Mammary epithelial cell (primary cell): ENCODE measurements at regions of chr1 and their contacts with region 1.

Region 1: GRCh38 chr1:19811206-19811851 is 3.8 kb downstream of the RNF186 start:
- DNase-seq: no peak
- H3K4me3 ChIP-seq: no peak overlapping the region
- H3K27ac ChIP-seq: no peak overlapping the region
- H3K4me1 ChIP-seq: no peaks in the 10 kb centered on the region
- H3K27me3 ChIP-seq: no peaks in the 10 kb centered on the region
- CTCF ChIP-seq: peak; percentile 63 to 68

Region 2: GRCh38 chr1:19704247-19705113 is 106.8 kb before region 1 on chr1:
- CTCF ChIA-PET with region 1: no interaction called
- dilution Hi-C with region 1: loop called (anchors 5 kb)
- in situ Hi-C with region 1: no loop called
- intact Hi-C with region 1: no loop called
- DNase-seq: peak; percentile 47
- H3K4me3 ChIP-seq: no peak overlapping the region
- H3K27ac ChIP-seq: no peak overlapping the region
- H3K4me1 ChIP-seq: no peaks in the 10 kb centered on the region
- H3K27me3 ChIP-seq: no peaks in the 10 kb centered on the region
- CTCF ChIP-seq: peak; percentile 79 to 95

Region 3: DNA sequence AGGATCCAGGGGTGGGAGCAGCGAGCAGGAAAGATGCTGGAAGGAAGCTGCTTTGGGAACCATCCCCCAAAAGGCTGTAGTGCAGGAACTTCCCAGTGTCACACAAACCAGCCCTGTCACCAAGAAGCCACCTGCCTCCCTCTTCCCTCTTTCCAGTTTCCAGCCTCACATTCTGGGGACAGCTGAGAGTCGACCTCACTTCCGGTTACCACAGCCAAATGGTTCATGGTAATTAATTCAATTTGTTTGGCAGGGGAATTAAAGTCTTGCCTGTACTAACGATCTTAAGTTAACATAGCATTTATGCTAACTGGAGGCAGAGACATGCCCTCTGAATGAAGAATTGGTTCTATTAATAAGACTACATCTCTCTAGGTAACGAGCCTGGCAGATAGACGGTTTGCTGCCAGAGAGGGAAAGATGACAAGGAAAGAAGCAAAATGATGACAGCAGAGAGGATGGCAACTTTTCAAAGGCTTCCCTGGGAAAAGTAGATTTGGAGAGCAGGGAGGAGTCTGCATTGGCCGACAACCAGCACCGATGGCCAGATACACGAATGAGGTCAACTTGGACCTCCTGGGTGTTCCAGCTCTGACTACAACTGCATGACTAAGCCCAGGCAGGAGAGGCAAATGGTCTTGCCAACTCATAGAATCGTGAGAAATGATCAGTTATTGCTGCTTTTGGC is 75.7 kb before region 1 on chr1:
- CTCF ChIA-PET with region 1: no interaction called
- dilution Hi-C with region 1: no loop called
- in situ Hi-C with region 1: no loop called
- intact Hi-C with region 1: loop called (anchors 1 kb)
- DNase-seq: peak; percentile 54
- H3K4me3 ChIP-seq: no peak overlapping the region
- H3K27ac ChIP-seq: no peak overlapping the region
- H3K4me1 ChIP-seq: peaks cover 15% of the 10 kb centered on the region
- H3K27me3 ChIP-seq: no peaks in the 10 kb centered on the region
- CTCF ChIP-seq: no peak

Region 4: GRCh38 chr1:19772053-19772452 is 39.3 kb before region 1 on chr1:
- CTCF ChIA-PET with region 1: no interaction called
- dilution Hi-C with region 1: loop called (anchors 5 kb)
- in situ Hi-C with region 1: no loop called
- intact Hi-C with region 1: no loop called
- DNase-seq: no peak
- H3K4me3 ChIP-seq: no peak overlapping the region
- H3K27ac ChIP-seq: no peak overlapping the region
- H3K4me1 ChIP-seq: no peaks in the 10 kb centered on the region
- H3K27me3 ChIP-seq: no peaks in the 10 kb centered on the region
- CTCF ChIP-seq: no peak